Cardiac septum (tissue), 1 donor: ENCODE measurements at regions of chr1 and their contacts with region 1.

Region 1: DNA sequence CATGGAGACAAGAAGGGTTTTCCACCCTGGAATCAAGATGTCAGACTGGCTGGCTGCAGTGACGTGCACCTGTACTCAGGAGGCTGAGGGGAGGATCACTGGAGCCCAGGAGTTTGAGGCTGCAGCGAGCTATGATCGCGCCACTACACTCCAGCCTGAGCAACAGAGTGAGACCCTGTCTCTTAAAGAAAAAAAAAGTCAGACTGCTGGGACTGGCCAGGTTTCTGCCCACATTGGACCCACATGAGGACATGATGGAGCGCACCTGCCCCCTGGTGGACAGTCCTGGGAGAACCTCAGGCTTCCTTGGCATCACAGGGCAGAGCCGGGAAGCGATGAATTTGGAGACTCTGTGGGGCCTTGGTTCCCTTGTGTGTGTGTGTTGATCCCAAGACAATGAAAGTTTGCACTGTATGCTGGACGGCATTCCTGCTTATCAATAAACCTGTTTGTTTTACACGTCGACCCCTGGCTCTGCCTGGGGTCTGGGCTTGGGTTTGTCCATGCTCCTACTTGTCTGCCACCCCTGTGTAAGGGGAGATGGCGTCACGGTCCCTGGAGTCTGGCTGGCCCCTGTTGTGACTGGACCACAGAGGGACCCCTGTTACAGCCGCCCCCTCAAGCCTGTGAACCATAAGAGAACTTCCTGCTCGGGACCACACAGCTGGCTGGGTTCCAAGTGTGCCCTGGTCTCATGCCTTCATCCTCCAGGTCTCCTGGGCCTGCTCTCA is 20.9 kb upstream of the VPS13D start:
- DNase-seq: peak; percentile 90

Region 2: DNA sequence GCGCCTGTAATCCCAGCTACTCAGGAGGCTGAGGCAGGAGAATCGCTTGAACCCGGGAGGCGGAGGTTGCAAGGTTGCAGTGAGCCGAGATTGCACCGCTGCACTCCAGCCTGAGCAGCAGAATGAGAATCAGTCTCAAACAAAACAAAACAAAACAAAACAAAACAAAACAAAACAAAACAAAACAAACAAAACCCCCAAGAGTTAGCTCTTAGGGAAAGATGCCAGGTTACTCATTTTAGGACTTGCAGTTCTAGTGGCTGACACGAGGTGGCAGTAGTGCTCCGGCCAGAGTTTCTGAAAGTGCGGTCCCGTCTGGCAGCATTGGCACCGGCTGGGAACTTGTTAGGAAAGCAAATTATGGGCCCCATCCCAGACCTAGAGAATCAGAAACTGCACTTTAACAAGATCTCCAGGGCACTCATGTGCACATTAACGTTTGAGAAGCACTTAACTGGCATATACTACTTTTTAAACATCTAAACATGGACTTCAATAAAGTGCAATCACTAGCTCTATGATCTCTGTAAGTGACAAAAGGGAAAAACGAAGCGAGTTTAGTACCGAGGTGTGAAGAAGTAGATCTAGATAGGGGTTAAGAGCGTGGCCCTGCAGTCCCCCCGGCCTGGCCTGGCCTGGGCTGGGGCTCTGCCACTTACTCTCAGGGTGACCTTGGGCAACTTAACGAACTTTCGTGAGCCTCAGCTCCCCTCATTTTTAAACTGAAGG is 84.1 kb before region 1 on chr1:
- intact Hi-C with region 1: loop called (anchors 1 kb)
- DNase-seq: peak; percentile 93

Region 3: GRCh38 chr1:12166834-12167492 is 42.0 kb before region 1 on chr1 and contains the start of gene TNFRSF1B:
- intact Hi-C with region 1: no loop called
- DNase-seq: peak; percentile 93
- total RNA-seq, gene TNFRSF1B: 15.5 TPM